Tibial artery (tissue), 4 donors: ENCODE measurements at regions of chr1 and their contacts with region 1.

Region 1: GRCh38 chr1:149927503-149928387 is at the start of gene SF3B4:
- DNase-seq: peak; percentile 94 to 97
- H3K4me3 ChIP-seq: peak within 1 kb of the TSS; percentile 84 to 88
- H3K27ac ChIP-seq: peak within 1 kb of the TSS; percentile 88 to 89
- H3K4me1 ChIP-seq: peaks cover 0 to 40% (median 24%) of the 10 kb centered on the region in 4 donors
- H3K27me3 ChIP-seq: no peaks in the 10 kb centered on the region
- CTCF ChIP-seq: no peak

Region 2: GRCh38 chr1:149886396-149887195 is 41.1 kb before region 1 on chr1:
- intact Hi-C with region 1: loop called (anchors 5 kb)
- DNase-seq: peak; percentile 91 to 94
- H3K4me3 ChIP-seq: peak overlapping the region; percentile 85 to 90
- H3K27ac ChIP-seq: peak overlapping the region; percentile 99 to 100
- H3K4me1 ChIP-seq: peaks cover 0 to 25% (median 19%) of the 10 kb centered on the region in 4 donors
- H3K27me3 ChIP-seq: no peaks in the 10 kb centered on the region
- CTCF ChIP-seq: no peak